ENCODE measurements at regions of chr9 and their contacts with region 1.

Region 1: DNA sequence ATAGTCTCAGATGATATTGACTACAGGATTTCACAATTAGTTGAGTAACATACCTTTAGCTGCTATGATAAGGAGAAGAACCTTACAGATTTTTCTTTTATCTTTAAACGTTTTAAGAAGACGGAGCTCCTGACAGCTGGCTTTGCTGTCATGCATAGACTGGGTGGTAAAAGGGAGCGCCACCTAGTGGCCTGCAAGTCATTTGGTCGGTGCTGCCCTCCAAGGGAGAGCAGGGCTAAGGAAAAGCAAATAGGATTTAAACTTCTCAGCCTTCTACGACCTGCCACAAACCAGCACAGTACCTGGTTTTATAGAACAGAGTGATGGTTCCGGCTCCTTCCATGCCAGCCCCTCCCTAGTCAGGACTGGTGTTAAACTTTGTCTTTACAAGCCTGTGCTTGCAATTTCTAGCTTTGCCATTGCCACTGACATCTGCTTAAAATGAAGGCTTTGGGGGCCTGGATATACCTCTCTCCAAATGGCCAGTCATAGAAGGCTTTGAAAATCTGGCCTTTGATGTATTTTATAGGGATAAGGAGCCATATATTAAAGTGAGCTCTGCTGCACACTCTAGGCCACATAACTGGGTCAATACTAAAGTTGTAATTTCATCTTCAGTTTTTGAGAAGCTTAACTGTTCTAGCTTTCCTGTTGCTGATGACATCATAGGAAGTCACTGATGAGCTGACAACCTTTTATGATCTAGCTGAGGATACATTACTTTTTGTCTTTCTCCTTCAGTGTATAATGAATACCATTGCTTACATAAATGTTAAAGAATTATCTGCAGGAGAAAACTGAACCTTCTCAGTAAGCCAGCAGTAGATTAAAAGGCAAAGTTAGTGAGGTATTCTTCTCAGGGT is 31.1 kb upstream of the ADAMTSL1 start:
- DNase-seq: peak; percentile 53 to 76 (median 74)
- ATAC-seq: peak; percentile 97
- H3K4me3 ChIP-seq: no peak overlapping the region
- H3K4me1 ChIP-seq: peaks cover 6% of the 10 kb centered on the region
- CTCF ChIP-seq: peak; percentile 73

Region 2: DNA sequence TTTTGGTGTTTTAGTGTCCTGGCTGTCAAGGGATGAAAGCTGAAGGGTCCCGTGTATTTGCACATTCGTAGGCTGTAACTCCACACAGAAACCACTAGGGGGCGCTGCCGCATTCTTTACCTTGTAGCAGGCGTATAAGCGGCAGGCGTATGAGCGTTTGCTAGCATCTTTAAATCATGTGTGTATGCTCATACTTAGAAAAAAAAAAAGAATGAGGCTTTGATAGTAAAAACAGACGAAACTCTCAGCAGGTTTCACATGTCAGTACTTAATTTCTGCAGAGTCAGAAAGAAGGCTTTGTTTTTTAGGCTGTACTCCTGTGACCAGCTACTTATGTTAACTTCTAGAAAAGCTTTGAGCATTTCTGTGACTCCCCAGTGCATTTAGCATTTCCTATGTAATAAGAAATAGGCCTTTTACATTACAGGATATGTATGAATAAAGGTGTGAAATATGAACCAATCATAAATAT is 187.7 kb before region 1 on chr9:
- intact Hi-C with region 1: loop called in 1 of 2 experiments (anchors 5 kb)
- DNase-seq: peak; percentile 50 to 74 (median 70)
- ATAC-seq: peak; percentile 90
- H3K4me3 ChIP-seq: no peak overlapping the region
- H3K4me1 ChIP-seq: no peaks in the 10 kb centered on the region
- CTCF ChIP-seq: peak; percentile 69

Region 3: GRCh38 chr9:18526685-18527084 is 83.8 kb after region 1 on chr9:
- intact Hi-C with region 1: no loop called
- DNase-seq: no peak
- ATAC-seq: no peak
- H3K4me3 ChIP-seq: no peak overlapping the region
- H3K4me1 ChIP-seq: no peaks in the 10 kb centered on the region
- CTCF ChIP-seq: no peak